Activated naive CD4-positive, alpha-beta T cell treated with anti-CD3 and anti-CD28 coated beads for 36 hours (primary cell): ENCODE measurements at regions of chr20 and their contacts with region 1.

Region 1: DNA sequence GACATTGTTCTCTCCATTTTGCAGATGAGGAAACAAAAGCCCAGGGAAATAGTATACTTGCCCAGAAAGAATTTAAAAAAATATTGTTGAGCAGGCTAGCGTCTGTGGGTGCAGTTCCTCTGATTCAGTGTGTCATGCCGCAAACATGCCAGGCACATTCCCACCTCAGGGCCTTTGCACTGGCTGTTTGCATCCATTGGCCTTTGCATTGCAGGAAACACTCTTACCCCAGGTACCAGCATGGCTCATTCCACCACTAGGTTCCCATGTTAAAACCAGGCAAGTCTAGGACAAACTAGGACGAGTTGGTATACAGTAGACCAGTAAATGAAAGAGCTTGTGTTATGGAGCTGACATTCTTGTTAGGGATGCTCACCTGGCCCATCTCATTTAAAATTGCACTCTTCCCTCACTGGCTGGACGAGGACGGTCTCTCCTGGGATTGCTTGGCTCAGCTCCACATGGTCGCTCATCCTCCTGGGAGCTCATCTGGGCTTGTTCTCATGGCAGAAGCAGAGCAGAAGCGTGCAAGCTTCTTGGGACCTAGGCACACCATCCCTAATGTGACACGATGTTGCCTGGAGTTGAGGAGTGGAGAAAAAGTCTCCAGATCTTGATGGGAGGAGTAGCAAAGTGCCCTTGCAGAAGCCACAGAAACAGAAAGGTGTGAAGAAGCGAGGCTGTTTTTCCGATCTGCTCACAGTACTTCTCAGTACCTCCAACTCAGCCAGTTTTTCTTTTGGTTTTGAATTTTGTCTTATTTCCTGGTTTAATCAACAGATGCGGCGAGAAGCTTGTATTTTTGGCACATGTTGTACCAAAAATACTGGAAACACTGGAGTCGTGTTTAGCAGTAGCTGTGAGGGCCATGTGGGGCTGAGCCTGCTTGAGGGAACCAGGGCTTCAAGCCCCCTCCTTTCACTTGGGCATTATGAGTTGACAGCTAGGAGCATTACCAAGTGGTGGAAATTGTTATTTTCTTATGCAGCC is 13.9 kb downstream of the ZNF831 start:
- DNase-seq: peak; percentile 67
- H3K4me3 Mint-ChIP-seq: peak overlapping the region; percentile 52
- H3K27ac Mint-ChIP-seq: peak overlapping the region; percentile 91
- H3K4me1 Mint-ChIP-seq: peaks cover 81% of the 10 kb centered on the region
- H3K27me3 Mint-ChIP-seq: no peaks in the 10 kb centered on the region

Region 2: GRCh38 chr20:58623826-58624473 is 553.6 kb before region 1 on chr20:
- CTCF ChIA-PET with region 1: no interaction called
- intact Hi-C with region 1: no loop called
- DNase-seq: no peak
- H3K4me3 Mint-ChIP-seq: no peak overlapping the region
- H3K27ac Mint-ChIP-seq: no peak overlapping the region
- H3K4me1 Mint-ChIP-seq: no peaks in the 10 kb centered on the region
- H3K27me3 Mint-ChIP-seq: peaks cover 5% of the 10 kb centered on the region

Region 3: DNA sequence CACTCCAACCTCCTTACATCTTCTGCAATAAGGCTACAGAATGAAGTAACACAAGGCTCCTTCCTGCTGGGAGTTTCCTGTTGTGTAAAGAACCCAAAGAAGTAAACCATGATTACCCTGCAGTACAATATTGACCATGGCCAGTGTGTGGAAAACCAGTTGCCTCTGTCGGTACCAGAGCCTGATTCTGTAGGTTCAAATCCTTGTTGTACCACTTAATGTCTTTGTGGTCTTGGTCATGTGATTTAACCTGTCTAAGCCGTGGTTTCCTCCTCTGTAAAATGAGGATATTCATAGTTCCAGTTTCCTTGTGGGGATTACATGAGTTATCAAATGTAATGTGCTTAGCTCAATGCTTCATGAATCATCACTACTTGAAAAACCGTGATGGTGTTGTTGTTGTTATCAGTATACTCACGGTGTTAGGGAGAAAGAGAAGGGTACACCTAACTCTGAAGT is 74.7 kb before region 1 on chr20:
- CTCF ChIA-PET with region 1: no interaction called
- intact Hi-C with region 1: no loop called
- DNase-seq: no peak
- H3K4me3 Mint-ChIP-seq: no peak overlapping the region
- H3K27ac Mint-ChIP-seq: peak overlapping the region; percentile 6
- H3K4me1 Mint-ChIP-seq: peaks cover 17% of the 10 kb centered on the region
- H3K27me3 Mint-ChIP-seq: no peaks in the 10 kb centered on the region

Region 4: GRCh38 chr20:59112978-59113377 is 64.6 kb before region 1 on chr20:
- CTCF ChIA-PET with region 1: no interaction called
- intact Hi-C with region 1: no loop called
- DNase-seq: no peak
- H3K4me3 Mint-ChIP-seq: no peak overlapping the region
- H3K27ac Mint-ChIP-seq: no peak overlapping the region
- H3K4me1 Mint-ChIP-seq: peaks cover 9% of the 10 kb centered on the region
- H3K27me3 Mint-ChIP-seq: no peaks in the 10 kb centered on the region

Region 5: GRCh38 chr20:59149651-59150504 is 27.7 kb before region 1 on chr20:
- CTCF ChIA-PET with region 1: interaction called, 4 read pairs
- intact Hi-C with region 1: loop called (anchors 2 kb)
- DNase-seq: peak; percentile 84
- H3K4me3 Mint-ChIP-seq: peak overlapping the region; percentile 30
- H3K27ac Mint-ChIP-seq: peak overlapping the region; percentile 82
- H3K4me1 Mint-ChIP-seq: peaks cover 88% of the 10 kb centered on the region
- H3K27me3 Mint-ChIP-seq: no peaks in the 10 kb centered on the region

Region 6: DNA sequence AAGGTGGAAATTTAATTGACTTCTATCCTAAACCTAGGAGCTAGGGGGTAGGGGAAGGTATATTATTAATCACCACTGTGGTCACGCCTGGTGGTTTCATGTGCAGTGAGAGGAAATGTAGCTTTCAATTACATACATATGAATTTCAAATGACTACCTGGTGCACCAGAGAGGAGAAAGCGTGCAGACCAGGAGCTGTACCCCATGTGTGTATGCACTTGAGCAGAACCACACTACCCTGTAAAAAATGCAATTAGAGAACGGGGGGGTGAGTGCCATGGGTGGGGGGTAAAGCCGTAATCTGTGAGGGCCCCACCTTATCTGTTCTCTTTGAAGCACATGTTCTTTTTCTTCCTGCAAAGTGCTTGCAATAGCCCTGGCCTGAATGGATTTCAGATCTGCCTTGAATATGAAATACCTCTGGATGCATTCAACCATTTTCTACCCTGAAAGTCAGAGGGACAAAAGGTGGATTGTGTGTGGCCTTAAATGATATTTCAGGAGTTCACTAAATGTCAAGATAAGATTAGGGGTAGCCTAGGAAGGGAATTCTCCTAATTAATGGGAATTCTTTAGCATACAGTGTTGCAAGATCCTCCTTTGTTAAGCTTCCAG is 92.0 kb after region 1 on chr20:
- CTCF ChIA-PET with region 1: no interaction called
- intact Hi-C with region 1: no loop called
- DNase-seq: peak; percentile 28
- H3K4me3 Mint-ChIP-seq: no peak overlapping the region
- H3K27ac Mint-ChIP-seq: no peak overlapping the region
- H3K4me1 Mint-ChIP-seq: peaks cover 20% of the 10 kb centered on the region
- H3K27me3 Mint-ChIP-seq: no peaks in the 10 kb centered on the region